CD8-positive, alpha-beta memory T cell (primary cell): ENCODE measurements at regions of chr17 and their contacts with region 1.

Region 1: GRCh38 chr17:8965394-8966168 is at the start of gene PIK3R5:
- DNase-seq: peak; percentile 78 to 86 (median 81)
- H3K4me3 ChIP-seq: peak within 1 kb of the TSS; percentile 77
- H3K4me3 Mint-ChIP-seq: peak within 1 kb of the TSS; percentile 98 to 100 (median 99)
- H3K27ac ChIP-seq: peak within 1 kb of the TSS; percentile 72
- H3K27ac Mint-ChIP-seq: peak within 1 kb of the TSS; percentile 90 to 99 (median 96)
- H3K4me1 ChIP-seq: peaks cover 44% of the 10 kb centered on the region
- H3K4me1 Mint-ChIP-seq: peaks cover 39 to 50% (median 44%) of the 10 kb centered on the region in 3 donors
- H3K27me3 ChIP-seq: no peaks in the 10 kb centered on the region
- H3K27me3 Mint-ChIP-seq: peaks cover 0 to 2% of the 10 kb centered on the region in 2 donors
- total RNA-seq, gene PIK3R5: 28.6 to 30.2 TPM

Region 2: GRCh38 chr17:8900626-8901585 is 64.7 kb before region 1 on chr17:
- CTCF ChIA-PET with region 1: interaction called, 12 read pairs
- POLR2A ChIA-PET with region 1: interaction called, 14 read pairs
- DNase-seq: peak in 1 of 5 donors; percentile 46
- H3K4me3 ChIP-seq: no peak overlapping the region
- H3K4me3 Mint-ChIP-seq: peak overlapping the region in 3 of 7 donors; percentile 5 to 24 (median 19)
- H3K27ac ChIP-seq: no peak overlapping the region
- H3K27ac Mint-ChIP-seq: peak overlapping the region; percentile 93 to 99 (median 97)
- H3K4me1 ChIP-seq: peaks cover 60% of the 10 kb centered on the region
- H3K4me1 Mint-ChIP-seq: peaks cover 77 to 81% (median 80%) of the 10 kb centered on the region in 3 donors
- H3K27me3 ChIP-seq: no peaks in the 10 kb centered on the region
- H3K27me3 Mint-ChIP-seq: peaks cover 0 to 1% of the 10 kb centered on the region in 2 donors

Region 3: GRCh38 chr17:8941520-8941919 is 24.1 kb before region 1 on chr17:
- CTCF ChIA-PET with region 1: interaction called, 26 read pairs
- POLR2A ChIA-PET with region 1: interaction called, 16 read pairs
- DNase-seq: peak; percentile 47 to 79 (median 72)
- H3K4me3 ChIP-seq: peak overlapping the region; percentile 43
- H3K4me3 Mint-ChIP-seq: peak overlapping the region; percentile 44 to 92 (median 83)
- H3K27ac ChIP-seq: peak overlapping the region; percentile 51
- H3K27ac Mint-ChIP-seq: peak overlapping the region; percentile 90 to 100 (median 96)
- H3K4me1 ChIP-seq: peaks cover 67% of the 10 kb centered on the region
- H3K4me1 Mint-ChIP-seq: peaks cover 89 to 96% (median 96%) of the 10 kb centered on the region in 3 donors
- H3K27me3 ChIP-seq: no peaks in the 10 kb centered on the region
- H3K27me3 Mint-ChIP-seq: no peaks in the 10 kb centered on the region

Region 4: DNA sequence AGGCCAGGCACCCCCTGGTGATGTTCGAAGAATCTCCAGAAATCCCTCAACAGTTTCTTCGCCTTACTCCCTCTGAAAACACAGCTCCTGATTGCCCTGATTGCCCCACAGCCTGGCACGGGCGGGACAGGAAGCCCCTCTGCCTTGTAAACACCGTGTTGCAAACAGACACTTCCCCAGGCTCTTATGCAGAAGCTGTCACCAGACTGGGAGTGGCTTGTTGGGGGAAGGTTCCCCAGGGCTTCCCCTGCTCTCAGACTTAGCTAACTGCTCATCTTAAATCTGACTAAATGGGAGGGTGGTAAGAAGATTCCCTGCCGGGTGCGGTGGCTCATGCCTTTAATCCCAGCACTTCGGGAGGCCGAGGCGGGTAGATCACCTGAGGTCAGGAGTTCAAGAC is 11.2 kb before region 1 on chr17:
- CTCF ChIA-PET with region 1: interaction called, 12 read pairs
- POLR2A ChIA-PET with region 1: interaction called, 44 read pairs
- DNase-seq: peak; percentile 74 to 90 (median 81)
- H3K4me3 ChIP-seq: peak overlapping the region; percentile 16
- H3K4me3 Mint-ChIP-seq: peak overlapping the region; percentile 61 to 91 (median 85)
- H3K27ac ChIP-seq: peak overlapping the region; percentile 39
- H3K27ac Mint-ChIP-seq: peak overlapping the region; percentile 92 to 99 (median 99)
- H3K4me1 ChIP-seq: peaks cover 95% of the 10 kb centered on the region
- H3K4me1 Mint-ChIP-seq: peaks cover 100% of the 10 kb centered on the region in 3 donors
- H3K27me3 ChIP-seq: no peaks in the 10 kb centered on the region
- H3K27me3 Mint-ChIP-seq: no peaks in the 10 kb centered on the region

Region 5: DNA sequence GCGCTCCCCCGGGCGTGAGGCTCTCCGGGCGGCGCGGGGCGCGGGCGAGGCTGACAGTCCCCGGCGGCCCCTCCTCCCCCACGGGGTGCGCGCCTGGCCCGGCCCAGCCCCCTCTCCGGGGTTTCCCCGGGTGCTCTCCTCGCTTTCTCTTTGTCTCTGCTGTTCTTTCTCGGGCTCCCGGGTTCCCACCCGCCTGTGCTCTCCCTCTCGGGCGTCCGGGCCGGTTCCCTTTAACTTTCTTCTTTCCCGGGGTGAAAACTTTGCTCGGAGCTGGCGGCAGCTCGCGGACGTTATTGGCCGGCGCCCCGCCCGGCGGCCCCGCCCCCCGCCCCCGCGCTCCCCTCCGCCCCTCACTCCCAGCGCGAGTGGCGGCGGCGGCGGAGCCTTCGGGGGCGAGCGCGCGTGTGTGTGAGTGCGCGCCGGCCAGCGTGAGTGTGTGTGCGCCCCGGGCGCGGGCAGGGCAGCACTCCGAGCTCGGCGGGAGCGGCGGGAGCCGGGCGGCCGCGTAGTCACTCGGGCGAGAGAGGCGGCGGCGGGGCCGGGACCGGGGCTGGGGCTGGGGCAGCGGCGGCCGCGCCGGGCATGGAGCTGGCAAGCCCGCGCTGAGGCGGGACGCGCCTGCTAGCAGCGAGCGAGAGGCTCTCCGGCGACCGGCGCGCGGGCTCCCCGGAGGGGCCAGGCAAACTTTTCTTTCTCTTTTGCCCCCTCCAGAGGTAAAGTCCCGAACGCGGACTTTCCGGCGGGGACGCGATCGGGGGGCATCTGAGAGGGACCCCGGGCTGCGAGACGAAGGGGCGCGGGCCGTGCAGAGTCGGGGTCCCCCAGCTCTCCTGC is 55.8 kb after region 1 on chr17 and contains the start of gene NTN1:
- CTCF ChIA-PET with region 1: no interaction called
- POLR2A ChIA-PET with region 1: no interaction called
- DNase-seq: peak in 4 of 5 donors; percentile 25 to 54 (median 42)
- H3K4me3 ChIP-seq: peak within 1 kb of the TSS; percentile 19
- H3K4me3 Mint-ChIP-seq: peak within 1 kb of the TSS; percentile 71 to 90 (median 78)
- H3K27ac ChIP-seq: no peak within 1 kb of the TSS
- H3K27ac Mint-ChIP-seq: peak within 1 kb of the TSS in 1 of 8 donors; percentile 8
- H3K4me1 ChIP-seq: peaks cover 8% of the 10 kb centered on the region
- H3K4me1 Mint-ChIP-seq: peaks cover 9 to 22% (median 10%) of the 10 kb centered on the region in 3 donors
- H3K27me3 ChIP-seq: peaks cover 42% of the 10 kb centered on the region
- H3K27me3 Mint-ChIP-seq: peaks cover 40 to 54% of the 10 kb centered on the region in 2 donors
- total RNA-seq, gene NTN1: 0.24 to 0.33 TPM

Region 6: DNA sequence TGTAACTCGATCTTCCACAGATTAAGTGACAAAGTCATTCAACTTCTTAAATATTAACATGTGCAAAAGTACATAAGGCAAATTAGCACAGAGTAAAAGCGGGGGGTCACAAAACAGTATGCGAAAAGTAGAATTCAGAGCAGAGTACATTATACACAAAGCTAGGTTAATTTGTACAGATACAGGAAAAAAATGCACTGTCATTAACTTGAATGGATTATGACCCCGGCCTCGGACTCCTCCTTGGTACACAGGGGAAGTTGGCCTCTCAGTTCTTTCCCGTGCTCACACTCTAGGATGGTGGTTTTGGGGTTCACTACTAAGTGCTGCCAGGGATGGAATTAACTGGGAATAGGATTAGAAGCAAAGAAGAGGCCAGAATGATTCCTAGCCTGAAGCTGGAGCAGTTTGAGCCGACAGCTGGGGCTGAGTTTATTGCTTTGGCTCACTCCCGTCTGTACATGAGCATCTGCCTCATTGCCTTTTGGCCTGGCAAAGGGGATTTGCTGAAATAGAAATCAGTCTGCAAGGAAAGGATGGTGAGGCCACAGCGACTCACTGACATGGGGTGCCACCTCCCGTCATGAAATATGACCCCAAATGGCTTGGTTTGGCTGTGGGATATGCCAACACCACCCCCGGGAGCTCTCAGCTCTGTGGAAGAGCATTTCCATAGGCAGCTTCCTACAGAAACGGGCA is 79.3 kb after region 1 on chr17:
- CTCF ChIA-PET with region 1: no interaction called
- POLR2A ChIA-PET with region 1: no interaction called
- DNase-seq: no peak
- H3K4me3 ChIP-seq: no peak overlapping the region
- H3K4me3 Mint-ChIP-seq: no peak overlapping the region
- H3K27ac ChIP-seq: no peak overlapping the region
- H3K27ac Mint-ChIP-seq: no peak overlapping the region
- H3K4me1 ChIP-seq: no peaks in the 10 kb centered on the region
- H3K4me1 Mint-ChIP-seq: no peaks in the 10 kb centered on the region
- H3K27me3 ChIP-seq: no peaks in the 10 kb centered on the region
- H3K27me3 Mint-ChIP-seq: peaks cover 19 to 56% of the 10 kb centered on the region in 2 donors